CD8-positive, alpha-beta T cell (primary cell): ENCODE measurements at regions of chr2 and their contacts with region 1.

Region 1: GRCh38 chr2:158753641-158754611 is 41.2 kb upstream of the DAPL1 start:
- DNase-seq: peak in 4 of 9 experiments; percentile 21 to 58 (median 37)
- ATAC-seq: peak; percentile 52
- H3K4me3 ChIP-seq: no peak overlapping the region
- H3K4me3 Mint-ChIP-seq: no peak overlapping the region
- H3K27ac ChIP-seq: no peak overlapping the region
- H3K27ac Mint-ChIP-seq: no peak overlapping the region
- H3K4me1 ChIP-seq: no peaks in the 10 kb centered on the region
- H3K4me1 Mint-ChIP-seq: no peaks in the 10 kb centered on the region
- H3K27me3 ChIP-seq: no peaks in the 10 kb centered on the region
- H3K27me3 Mint-ChIP-seq: peaks cover 20% of the 10 kb centered on the region
- CTCF ChIP-seq: peak; percentile 91

Region 2: GRCh38 chr2:157497638-157498314 is 1256.2 kb before region 1 on chr2:
- CTCF ChIA-PET with region 1: no interaction called
- POLR2A ChIA-PET with region 1: no interaction called
- intact Hi-C with region 1: loop called (anchors 5 kb)
- DNase-seq: peak in 2 of 9 experiments; percentile 49 to 62
- ATAC-seq: peak; percentile 91
- H3K4me3 ChIP-seq: no peak overlapping the region
- H3K4me3 Mint-ChIP-seq: no peak overlapping the region
- H3K27ac ChIP-seq: no peak overlapping the region
- H3K27ac Mint-ChIP-seq: no peak overlapping the region
- H3K4me1 ChIP-seq: peaks cover 7% of the 10 kb centered on the region
- H3K4me1 Mint-ChIP-seq: peaks cover 33% of the 10 kb centered on the region
- H3K27me3 ChIP-seq: no peaks in the 10 kb centered on the region
- H3K27me3 Mint-ChIP-seq: no peaks in the 10 kb centered on the region
- CTCF ChIP-seq: peak; percentile 71

Region 3: DNA sequence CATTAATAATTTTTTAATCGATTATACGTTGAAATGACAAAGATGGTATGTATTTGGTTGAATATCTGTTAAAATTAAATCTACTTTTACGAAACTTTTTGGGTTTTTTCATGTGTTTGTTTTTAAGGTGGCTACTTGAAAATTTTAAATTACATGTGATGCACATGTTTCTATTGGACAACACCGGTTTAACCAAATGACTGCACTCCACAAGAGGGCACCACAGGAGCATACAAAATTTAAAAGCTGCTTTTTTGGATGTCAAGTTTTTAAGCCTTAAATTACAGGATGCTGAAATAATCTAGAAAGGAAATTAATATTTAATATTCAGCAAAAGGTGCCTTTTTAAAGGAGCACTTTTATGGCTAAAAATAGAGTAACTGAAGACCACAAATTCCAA is 976.5 kb before region 1 on chr2:
- CTCF ChIA-PET with region 1: interaction called, 3 read pairs
- POLR2A ChIA-PET with region 1: no interaction called
- intact Hi-C with region 1: loop called (anchors 2 to 5 kb)
- DNase-seq: peak in 8 of 9 experiments; percentile 4 to 55 (median 40)
- ATAC-seq: no peak
- H3K4me3 ChIP-seq: no peak overlapping the region
- H3K4me3 Mint-ChIP-seq: no peak overlapping the region
- H3K27ac ChIP-seq: no peak overlapping the region
- H3K27ac Mint-ChIP-seq: no peak overlapping the region
- H3K4me1 ChIP-seq: no peaks in the 10 kb centered on the region
- H3K4me1 Mint-ChIP-seq: peaks cover 11% of the 10 kb centered on the region
- H3K27me3 ChIP-seq: no peaks in the 10 kb centered on the region
- H3K27me3 Mint-ChIP-seq: no peaks in the 10 kb centered on the region
- CTCF ChIP-seq: peak; percentile 68

Region 4: DNA sequence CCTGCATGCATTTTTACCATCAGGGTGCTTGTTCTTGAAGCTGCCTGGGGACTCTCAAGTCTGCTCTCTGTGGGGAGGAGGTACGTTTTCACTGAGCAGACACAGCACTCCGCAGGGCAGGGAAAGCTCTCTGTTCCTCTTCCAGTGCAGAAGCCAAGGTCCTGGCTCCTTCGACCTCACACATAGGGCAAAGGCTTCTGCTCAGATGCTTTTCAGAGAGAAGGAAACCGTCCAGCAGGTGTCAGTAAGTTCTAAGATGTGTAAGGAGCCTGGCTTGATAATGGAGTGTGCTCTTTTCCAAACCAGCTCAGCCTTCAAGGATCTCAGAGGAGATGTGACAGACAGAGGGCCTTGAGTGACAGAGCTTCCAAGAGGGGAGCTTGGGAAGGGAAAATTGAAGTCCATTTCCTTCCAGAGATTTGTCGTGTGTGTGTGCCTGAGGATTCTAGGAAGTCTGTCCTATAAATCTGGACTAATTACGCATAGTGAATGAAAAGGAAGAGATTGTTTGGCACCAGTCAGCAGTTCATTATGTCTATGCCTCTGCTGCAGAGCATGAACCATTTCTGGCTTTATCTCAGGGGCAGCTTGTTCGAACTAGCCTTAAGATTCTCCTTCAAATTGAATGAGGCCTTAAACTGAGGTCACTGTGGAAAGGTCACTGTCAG is 719.6 kb before region 1 on chr2:
- CTCF ChIA-PET with region 1: interaction called, 15 read pairs
- POLR2A ChIA-PET with region 1: no interaction called
- intact Hi-C with region 1: no loop called
- DNase-seq: peak in 2 of 9 experiments; percentile 12 to 35
- ATAC-seq: no peak
- H3K4me3 ChIP-seq: no peak overlapping the region
- H3K4me3 Mint-ChIP-seq: no peak overlapping the region
- H3K27ac ChIP-seq: no peak overlapping the region
- H3K27ac Mint-ChIP-seq: no peak overlapping the region
- H3K4me1 ChIP-seq: no peaks in the 10 kb centered on the region
- H3K4me1 Mint-ChIP-seq: no peaks in the 10 kb centered on the region
- H3K27me3 ChIP-seq: no peaks in the 10 kb centered on the region
- H3K27me3 Mint-ChIP-seq: peaks cover 11% of the 10 kb centered on the region
- CTCF ChIP-seq: no peak

Region 5: GRCh38 chr2:158179660-158180059 is 574.3 kb before region 1 on chr2:
- CTCF ChIA-PET with region 1: interaction called, 20 read pairs
- POLR2A ChIA-PET with region 1: no interaction called
- intact Hi-C with region 1: loop called (anchors 5 kb)
- DNase-seq: peak in 2 of 9 experiments; percentile 1 to 16
- ATAC-seq: no peak
- H3K4me3 ChIP-seq: no peak overlapping the region
- H3K4me3 Mint-ChIP-seq: no peak overlapping the region
- H3K27ac ChIP-seq: no peak overlapping the region
- H3K27ac Mint-ChIP-seq: no peak overlapping the region
- H3K4me1 ChIP-seq: no peaks in the 10 kb centered on the region
- H3K4me1 Mint-ChIP-seq: no peaks in the 10 kb centered on the region
- H3K27me3 ChIP-seq: no peaks in the 10 kb centered on the region
- H3K27me3 Mint-ChIP-seq: peaks cover 29% of the 10 kb centered on the region
- CTCF ChIP-seq: no peak

Region 6: DNA sequence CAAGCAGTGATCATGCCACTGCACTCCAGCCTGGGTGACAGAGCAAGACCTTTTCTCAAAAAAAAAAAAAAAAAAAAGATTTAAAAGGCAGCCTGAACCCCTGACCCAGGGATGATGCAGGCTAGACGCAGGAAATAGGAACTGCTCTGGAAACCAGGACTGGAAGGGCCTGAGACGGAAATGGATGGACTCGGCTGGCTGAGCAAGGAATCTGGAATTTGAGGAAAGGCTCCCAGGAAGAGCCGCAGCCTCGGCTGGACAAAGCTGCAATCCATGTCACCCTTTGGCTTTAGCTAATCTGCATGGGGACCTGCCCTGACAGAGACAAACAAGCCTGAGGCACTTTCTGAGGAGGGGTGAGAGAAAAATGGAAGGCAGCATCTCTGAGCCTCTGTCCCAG is 13.8 kb before region 1 on chr2:
- CTCF ChIA-PET with region 1: interaction called, 65 read pairs
- POLR2A ChIA-PET with region 1: no interaction called
- intact Hi-C with region 1: no loop called
- DNase-seq: no peak
- ATAC-seq: no peak
- H3K4me3 ChIP-seq: no peak overlapping the region
- H3K4me3 Mint-ChIP-seq: no peak overlapping the region
- H3K27ac ChIP-seq: no peak overlapping the region
- H3K27ac Mint-ChIP-seq: no peak overlapping the region
- H3K4me1 ChIP-seq: no peaks in the 10 kb centered on the region
- H3K4me1 Mint-ChIP-seq: no peaks in the 10 kb centered on the region
- H3K27me3 ChIP-seq: no peaks in the 10 kb centered on the region
- H3K27me3 Mint-ChIP-seq: peaks cover 4% of the 10 kb centered on the region
- CTCF ChIP-seq: no peak

Region 7: GRCh38 chr2:158773121-158773520 is 19.2 kb after region 1 on chr2:
- CTCF ChIA-PET with region 1: interaction called, 16 read pairs
- POLR2A ChIA-PET with region 1: no interaction called
- intact Hi-C with region 1: no loop called
- DNase-seq: no peak
- ATAC-seq: no peak
- H3K4me3 ChIP-seq: no peak overlapping the region
- H3K4me3 Mint-ChIP-seq: no peak overlapping the region
- H3K27ac ChIP-seq: no peak overlapping the region
- H3K27ac Mint-ChIP-seq: no peak overlapping the region
- H3K4me1 ChIP-seq: no peaks in the 10 kb centered on the region
- H3K4me1 Mint-ChIP-seq: no peaks in the 10 kb centered on the region
- H3K27me3 ChIP-seq: no peaks in the 10 kb centered on the region
- H3K27me3 Mint-ChIP-seq: peaks cover 2% of the 10 kb centered on the region
- CTCF ChIP-seq: no peak